B cell (primary cell): ENCODE measurements at regions of chr5 and their contacts with region 1.

Region 1: GRCh38 chr5:59188419-59189225 is 605.7 kb downstream of the RAB3C start:
- DNase-seq: peak; percentile 73
- ATAC-seq: peak; percentile 62
- H3K4me3 ChIP-seq: no peak overlapping the region
- H3K4me3 Mint-ChIP-seq: peak overlapping the region; percentile 5
- H3K27ac ChIP-seq: no peak overlapping the region
- H3K27ac Mint-ChIP-seq: no peak overlapping the region
- H3K4me1 ChIP-seq: peaks cover 4 to 6% of the 10 kb centered on the region in 2 donors
- H3K4me1 Mint-ChIP-seq: peaks cover 3% of the 10 kb centered on the region
- H3K27me3 ChIP-seq: no peaks in the 10 kb centered on the region
- H3K27me3 Mint-ChIP-seq: peaks cover 10% of the 10 kb centered on the region
- CTCF ChIP-seq: peak; percentile 93

Region 2: DNA sequence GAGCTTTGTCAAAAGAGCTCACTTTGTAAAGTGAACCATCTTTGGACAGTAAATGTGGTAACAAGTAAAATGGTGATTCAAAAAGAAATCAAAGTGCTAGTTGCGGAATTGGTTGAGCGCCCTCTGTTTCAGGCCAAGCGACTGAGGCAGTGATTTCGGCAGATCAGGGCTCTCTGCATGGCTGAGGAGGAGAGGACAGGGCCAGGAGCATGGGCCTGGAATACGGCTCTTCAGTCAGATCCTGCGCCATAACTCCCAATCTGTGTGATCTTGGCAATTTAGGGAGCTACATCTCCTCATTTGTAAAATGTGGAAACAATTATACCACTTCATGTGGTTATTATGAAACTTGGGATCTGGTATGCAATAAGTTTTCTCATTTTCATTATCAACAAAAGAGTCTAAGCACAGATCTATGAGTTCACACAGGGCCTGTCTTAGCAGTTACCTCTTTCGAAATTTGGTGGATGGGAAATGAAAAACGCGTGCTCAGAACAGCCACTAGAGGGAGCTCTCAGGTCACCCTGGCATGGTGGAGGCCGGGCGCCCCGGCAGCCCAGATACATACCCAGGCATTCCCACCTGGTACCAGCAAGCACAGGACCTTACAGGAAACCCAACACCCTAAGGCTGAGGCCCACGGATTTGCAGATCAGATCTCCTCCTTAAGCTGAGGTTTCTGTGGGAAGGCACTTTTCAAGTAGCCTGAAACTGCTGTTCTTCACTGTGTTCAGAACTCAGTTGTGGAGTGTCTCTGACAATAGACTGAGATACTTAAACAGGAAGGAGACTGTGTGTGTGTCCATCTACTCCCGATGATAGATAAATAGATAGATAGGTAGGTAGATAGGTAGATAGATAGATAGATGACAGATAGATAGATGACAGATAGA is 302.1 kb before region 1 on chr5:
- CTCF ChIA-PET with region 1: interaction called, 15 read pairs
- POLR2A ChIA-PET with region 1: no interaction called
- intact Hi-C with region 1: no loop called
- DNase-seq: peak; percentile 70
- ATAC-seq: peak; percentile 89
- H3K4me3 ChIP-seq: no peak overlapping the region
- H3K4me3 Mint-ChIP-seq: no peak overlapping the region
- H3K27ac ChIP-seq: no peak overlapping the region
- H3K27ac Mint-ChIP-seq: no peak overlapping the region
- H3K4me1 ChIP-seq: peaks cover 0 to 3% of the 10 kb centered on the region in 2 donors
- H3K4me1 Mint-ChIP-seq: peaks cover 5% of the 10 kb centered on the region
- H3K27me3 ChIP-seq: peaks cover 0 to 7% (median 5%) of the 10 kb centered on the region in 4 experiments
- H3K27me3 Mint-ChIP-seq: peaks cover 14% of the 10 kb centered on the region
- CTCF ChIP-seq: peak; percentile 89

Region 3: DNA sequence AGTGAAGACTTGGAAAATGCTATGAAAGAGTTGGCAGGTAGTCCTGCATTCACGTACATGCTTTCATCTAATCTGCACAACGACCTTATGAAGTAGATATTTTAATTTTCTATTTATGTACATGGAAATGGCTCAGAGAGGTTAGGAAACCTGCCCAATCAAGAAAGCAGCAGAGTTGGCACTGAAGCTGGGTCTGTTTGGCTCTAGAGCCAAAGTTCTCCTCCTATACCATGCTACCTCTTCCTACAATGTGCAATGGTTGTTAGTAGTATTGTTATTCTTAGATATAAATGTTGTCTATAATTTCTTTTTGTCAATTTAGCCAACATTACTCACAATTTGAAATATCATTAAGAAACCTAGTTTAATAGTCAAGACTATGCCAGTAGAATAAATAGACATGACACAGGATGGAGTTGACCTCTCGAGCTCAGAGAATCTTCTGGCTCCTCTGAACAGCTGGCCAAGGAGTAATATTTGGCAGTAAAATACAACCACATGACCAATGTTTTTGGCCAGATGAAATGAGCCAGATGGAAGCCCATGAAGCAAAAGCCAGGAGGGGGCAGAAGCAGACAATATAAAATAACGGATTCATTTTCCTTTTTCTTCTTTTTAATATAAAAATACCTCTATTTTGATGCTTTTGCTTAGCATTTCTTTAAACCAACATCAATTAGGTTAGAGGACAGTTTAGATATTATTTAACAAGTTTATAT is 162.6 kb after region 1 on chr5:
- CTCF ChIA-PET with region 1: interaction called, 16 read pairs
- POLR2A ChIA-PET with region 1: no interaction called
- intact Hi-C with region 1: no loop called
- DNase-seq: no peak
- ATAC-seq: no peak
- H3K4me3 ChIP-seq: no peak overlapping the region
- H3K4me3 Mint-ChIP-seq: no peak overlapping the region
- H3K27ac ChIP-seq: no peak overlapping the region
- H3K27ac Mint-ChIP-seq: no peak overlapping the region
- H3K4me1 ChIP-seq: no peaks in the 10 kb centered on the region
- H3K4me1 Mint-ChIP-seq: no peaks in the 10 kb centered on the region
- H3K27me3 ChIP-seq: no peaks in the 10 kb centered on the region
- H3K27me3 Mint-ChIP-seq: no peaks in the 10 kb centered on the region
- CTCF ChIP-seq: no peak

Region 4: GRCh38 chr5:59380350-59380951 is 191.8 kb after region 1 on chr5:
- CTCF ChIA-PET with region 1: interaction called, 68 read pairs
- POLR2A ChIA-PET with region 1: interaction called, 3 read pairs
- intact Hi-C with region 1: loop called (anchors 1 kb)
- DNase-seq: peak; percentile 64
- ATAC-seq: peak; percentile 85
- H3K4me3 ChIP-seq: no peak overlapping the region
- H3K4me3 Mint-ChIP-seq: no peak overlapping the region
- H3K27ac ChIP-seq: no peak overlapping the region
- H3K27ac Mint-ChIP-seq: no peak overlapping the region
- H3K4me1 ChIP-seq: no peaks in the 10 kb centered on the region
- H3K4me1 Mint-ChIP-seq: peaks cover 5% of the 10 kb centered on the region
- H3K27me3 ChIP-seq: no peaks in the 10 kb centered on the region
- H3K27me3 Mint-ChIP-seq: no peaks in the 10 kb centered on the region
- CTCF ChIP-seq: peak; percentile 72

Region 5: GRCh38 chr5:59506285-59506877 is 317.8 kb after region 1 on chr5:
- CTCF ChIA-PET with region 1: interaction called, 6 read pairs
- POLR2A ChIA-PET with region 1: no interaction called
- intact Hi-C with region 1: loop called (anchors 10 kb)
- DNase-seq: peak; percentile 57
- ATAC-seq: no peak
- H3K4me3 ChIP-seq: no peak overlapping the region
- H3K4me3 Mint-ChIP-seq: no peak overlapping the region
- H3K27ac ChIP-seq: no peak overlapping the region
- H3K27ac Mint-ChIP-seq: no peak overlapping the region
- H3K4me1 ChIP-seq: no peaks in the 10 kb centered on the region
- H3K4me1 Mint-ChIP-seq: no peaks in the 10 kb centered on the region
- H3K27me3 ChIP-seq: no peaks in the 10 kb centered on the region
- H3K27me3 Mint-ChIP-seq: no peaks in the 10 kb centered on the region
- CTCF ChIP-seq: peak; percentile 81

Region 6: DNA sequence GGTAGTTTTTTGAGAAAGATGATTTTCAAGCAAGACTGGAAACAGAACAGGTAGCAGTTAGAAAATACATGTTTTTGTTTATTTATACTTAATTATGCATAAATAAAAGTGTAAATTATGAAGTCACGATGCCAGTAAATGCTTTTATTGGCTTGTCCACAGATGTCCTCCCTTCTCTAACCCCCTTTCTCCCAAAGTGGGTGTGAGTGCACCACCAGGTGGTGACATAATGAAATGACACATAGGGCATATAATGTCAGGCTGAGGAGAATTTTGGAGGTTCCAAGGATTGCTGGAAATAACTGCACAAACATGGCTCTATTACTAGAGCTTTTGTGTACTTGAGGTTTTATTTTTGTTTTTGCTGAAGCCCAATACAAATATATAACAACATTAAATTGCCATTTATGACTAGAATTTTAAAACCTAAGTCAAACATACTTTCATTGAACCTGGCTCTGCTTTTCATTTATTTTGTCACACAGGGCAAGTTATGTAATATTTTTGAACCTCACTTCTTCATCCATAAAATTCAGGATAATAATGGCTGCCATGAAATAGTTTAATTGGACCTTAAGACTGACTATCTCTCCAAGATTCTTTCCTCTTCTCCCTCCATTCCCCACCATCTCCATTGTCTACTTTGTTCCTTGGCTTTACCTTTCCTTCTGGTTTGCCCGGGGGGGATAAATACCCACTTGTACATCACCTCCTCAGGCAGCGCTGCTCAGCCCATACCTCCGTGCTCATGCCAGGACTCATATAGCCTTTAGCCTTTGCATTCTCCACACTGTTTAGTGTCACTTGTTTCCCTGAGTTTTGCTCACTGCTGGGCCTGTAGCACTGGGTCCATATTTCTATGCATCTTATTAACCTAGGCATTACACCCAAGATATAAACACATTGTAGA is 536.1 kb after region 1 on chr5:
- CTCF ChIA-PET with region 1: interaction called, 3 read pairs
- POLR2A ChIA-PET with region 1: no interaction called
- intact Hi-C with region 1: loop called (anchors 5 kb)
- DNase-seq: peak; percentile 59
- ATAC-seq: peak; percentile 64
- H3K4me3 ChIP-seq: no peak overlapping the region
- H3K4me3 Mint-ChIP-seq: no peak overlapping the region
- H3K27ac ChIP-seq: no peak overlapping the region
- H3K27ac Mint-ChIP-seq: no peak overlapping the region
- H3K4me1 ChIP-seq: no peaks in the 10 kb centered on the region
- H3K4me1 Mint-ChIP-seq: peaks cover 19% of the 10 kb centered on the region
- H3K27me3 ChIP-seq: no peaks in the 10 kb centered on the region
- H3K27me3 Mint-ChIP-seq: no peaks in the 10 kb centered on the region
- CTCF ChIP-seq: peak; percentile 79